Breast epithelium (tissue), 4 donors: ENCODE measurements at regions of chr22 and their contacts with region 1.

Region 1: DNA sequence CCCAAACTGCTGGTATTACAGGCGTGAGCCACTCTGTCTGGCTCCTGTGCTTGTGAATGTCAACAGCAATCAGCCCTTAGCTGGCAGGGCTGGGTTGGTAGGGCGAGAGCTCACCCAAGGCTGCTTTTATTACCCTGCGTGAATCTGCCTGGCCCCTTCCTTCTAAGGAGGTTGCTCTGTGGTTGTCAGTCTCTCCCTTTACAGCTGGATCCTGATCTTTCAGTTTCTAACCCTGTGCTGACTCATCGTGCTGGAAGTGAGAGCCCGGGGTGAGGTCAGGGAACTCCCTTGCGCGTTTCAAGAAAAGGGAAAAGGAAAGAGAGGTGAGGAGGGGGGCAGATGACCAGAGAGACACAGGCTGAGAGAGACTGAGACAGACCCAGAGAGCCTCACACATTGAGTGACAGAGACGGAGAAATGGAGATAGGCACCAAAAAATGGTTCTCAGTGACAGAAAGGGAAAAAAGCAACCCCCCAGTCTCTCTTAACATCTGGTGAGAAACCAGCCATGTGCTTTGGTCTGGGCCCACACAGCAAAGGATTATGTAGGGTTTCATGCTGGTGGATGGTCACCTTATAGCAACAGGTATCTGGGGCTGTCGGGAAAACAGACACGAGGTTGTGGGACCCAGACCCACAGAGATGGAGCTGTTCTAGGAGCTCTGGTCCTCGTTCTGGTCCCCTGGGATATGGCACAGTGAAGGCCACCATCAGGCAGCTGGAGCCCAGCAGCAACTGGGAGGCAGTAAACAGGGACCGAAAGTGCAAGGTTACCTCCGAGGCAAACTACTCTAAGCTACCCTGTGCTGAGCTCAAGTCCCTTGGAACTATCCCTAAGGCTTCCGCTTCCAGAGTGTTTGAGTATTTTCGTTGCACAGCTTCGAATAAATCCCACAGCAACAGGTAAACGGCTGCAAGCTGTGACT is 2.5 kb downstream of the TCN2 start:
- DNase-seq: no peak
- H3K4me3 ChIP-seq: peak overlapping the region in 1 of 3 donors; percentile 56
- H3K27ac ChIP-seq: peak overlapping the region; percentile 37 to 62
- H3K4me1 ChIP-seq: peaks cover 0 to 7% of the 10 kb centered on the region in 2 donors
- H3K27me3 ChIP-seq: no peaks in the 10 kb centered on the region
- CTCF ChIP-seq: no peak
- POLR2A ChIP-seq: no peak

Region 2: DNA sequence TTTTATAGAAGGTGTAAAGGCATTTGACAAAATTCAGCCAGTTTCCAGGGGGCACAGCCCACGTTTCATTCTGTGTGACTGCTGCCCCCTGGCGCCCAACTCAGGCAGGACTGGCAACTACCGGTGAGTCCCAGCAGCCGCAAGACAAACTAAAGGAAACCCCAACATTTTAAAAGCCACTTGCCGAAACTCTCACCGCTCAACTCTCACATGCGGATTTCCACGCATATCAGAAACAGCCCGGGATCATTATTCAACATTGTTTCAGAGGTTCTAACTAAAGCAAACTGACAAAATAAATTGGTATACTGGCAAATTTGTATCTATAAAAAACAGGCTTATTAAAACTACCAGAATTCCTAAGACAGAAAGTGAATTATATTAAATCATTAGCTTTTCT is 310.9 kb after region 1 on chr22:
- intact Hi-C with region 1: loop called (anchors 10 kb)
- DNase-seq: peak; percentile 63 to 74
- H3K4me3 ChIP-seq: peak overlapping the region in 1 of 3 donors; percentile 23
- H3K27ac ChIP-seq: no peak overlapping the region
- H3K4me1 ChIP-seq: no peaks in the 10 kb centered on the region
- H3K27me3 ChIP-seq: no peaks in the 10 kb centered on the region
- CTCF ChIP-seq: peak; percentile 62 to 88 (median 84)
- POLR2A ChIP-seq: no peak